ENCODE measurements at regions of chr1 and their contacts with region 1.

Region 1: GRCh38 chr1:45011837-45012638 is at the start of gene UROD:
- DNase-seq: peak; percentile 96
- ATAC-seq: peak; percentile 81
- H3K4me3 Mint-ChIP-seq: peak within 1 kb of the TSS; percentile 75
- H3K27ac Mint-ChIP-seq: peak within 1 kb of the TSS; percentile 93
- H3K4me1 Mint-ChIP-seq: peaks cover 35% of the 10 kb centered on the region
- H3K27me3 Mint-ChIP-seq: no peaks in the 10 kb centered on the region
- total RNA-seq, gene UROD: 68.5 to 72.7 TPM

Region 2: DNA sequence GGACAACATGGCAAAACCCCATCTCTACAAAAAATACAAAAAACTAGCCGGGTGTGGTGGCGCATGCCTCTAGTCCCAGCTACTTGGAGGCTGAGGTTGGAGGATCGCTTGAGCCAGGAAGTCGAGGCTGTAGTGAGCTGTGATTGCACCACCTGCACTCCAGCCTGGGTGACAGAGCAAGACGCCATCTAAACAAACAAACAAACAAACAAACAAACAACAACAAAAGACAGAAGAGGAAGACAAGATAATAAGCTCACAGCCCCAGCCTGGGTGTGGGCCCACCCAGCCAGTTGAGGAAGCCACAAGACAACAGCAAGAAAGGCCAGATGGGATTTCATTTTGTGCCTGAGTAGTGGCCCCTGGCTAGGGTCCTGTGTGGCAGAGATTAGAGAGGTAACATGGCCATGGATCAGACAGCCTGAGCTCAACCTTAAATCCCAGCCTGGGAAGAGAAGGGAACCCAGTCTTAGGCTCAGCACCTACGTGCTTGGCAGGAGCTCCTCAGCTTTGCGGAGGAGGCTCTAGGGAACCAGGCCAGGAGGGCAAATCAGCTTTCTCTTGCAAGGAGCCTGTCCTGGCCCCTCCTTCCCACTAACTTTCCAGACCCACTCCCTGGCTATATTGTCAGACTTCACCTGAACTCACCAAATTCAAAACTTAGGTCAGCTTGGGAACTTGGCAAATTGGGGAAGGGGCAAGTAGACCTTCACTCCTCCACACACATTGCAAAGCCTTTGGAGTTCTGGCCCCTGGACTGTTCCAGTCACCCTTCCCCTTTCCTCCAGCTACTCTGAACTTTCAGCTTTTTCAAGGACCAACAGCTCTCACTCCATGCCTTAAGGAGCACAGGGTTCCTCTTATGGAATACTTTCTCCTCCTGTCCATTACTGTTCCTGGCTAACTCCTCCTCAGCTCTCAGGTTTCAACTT is 219.0 kb before region 1 on chr1:
- CTCF ChIA-PET with region 1: interaction called, 22 read pairs
- DNase-seq: no peak
- ATAC-seq: no peak
- H3K4me3 Mint-ChIP-seq: no peak overlapping the region
- H3K27ac Mint-ChIP-seq: no peak overlapping the region
- H3K4me1 Mint-ChIP-seq: peaks cover 7% of the 10 kb centered on the region
- H3K27me3 Mint-ChIP-seq: no peaks in the 10 kb centered on the region

Region 3: GRCh38 chr1:44985747-44986359 is 26.2 kb before region 1 on chr1:
- CTCF ChIA-PET with region 1: interaction called, 16 read pairs
- DNase-seq: no peak
- ATAC-seq: no peak
- H3K4me3 Mint-ChIP-seq: peak overlapping the region; percentile 95
- H3K27ac Mint-ChIP-seq: peak overlapping the region; percentile 85
- H3K4me1 Mint-ChIP-seq: peaks cover 20% of the 10 kb centered on the region
- H3K27me3 Mint-ChIP-seq: no peaks in the 10 kb centered on the region

Region 4: GRCh38 chr1:45326627-45327623 is 314.9 kb after region 1 on chr1 and contains the start of gene HPDL:
- CTCF ChIA-PET with region 1: interaction called, 11 read pairs
- DNase-seq: peak; percentile 83
- ATAC-seq: peak; percentile 89
- H3K4me3 Mint-ChIP-seq: peak within 1 kb of the TSS; percentile 80
- H3K27ac Mint-ChIP-seq: peak within 1 kb of the TSS; percentile 83
- H3K4me1 Mint-ChIP-seq: peaks cover 24% of the 10 kb centered on the region
- H3K27me3 Mint-ChIP-seq: no peaks in the 10 kb centered on the region
- total RNA-seq, gene HPDL: 16.3 to 23.4 TPM

Region 5: DNA sequence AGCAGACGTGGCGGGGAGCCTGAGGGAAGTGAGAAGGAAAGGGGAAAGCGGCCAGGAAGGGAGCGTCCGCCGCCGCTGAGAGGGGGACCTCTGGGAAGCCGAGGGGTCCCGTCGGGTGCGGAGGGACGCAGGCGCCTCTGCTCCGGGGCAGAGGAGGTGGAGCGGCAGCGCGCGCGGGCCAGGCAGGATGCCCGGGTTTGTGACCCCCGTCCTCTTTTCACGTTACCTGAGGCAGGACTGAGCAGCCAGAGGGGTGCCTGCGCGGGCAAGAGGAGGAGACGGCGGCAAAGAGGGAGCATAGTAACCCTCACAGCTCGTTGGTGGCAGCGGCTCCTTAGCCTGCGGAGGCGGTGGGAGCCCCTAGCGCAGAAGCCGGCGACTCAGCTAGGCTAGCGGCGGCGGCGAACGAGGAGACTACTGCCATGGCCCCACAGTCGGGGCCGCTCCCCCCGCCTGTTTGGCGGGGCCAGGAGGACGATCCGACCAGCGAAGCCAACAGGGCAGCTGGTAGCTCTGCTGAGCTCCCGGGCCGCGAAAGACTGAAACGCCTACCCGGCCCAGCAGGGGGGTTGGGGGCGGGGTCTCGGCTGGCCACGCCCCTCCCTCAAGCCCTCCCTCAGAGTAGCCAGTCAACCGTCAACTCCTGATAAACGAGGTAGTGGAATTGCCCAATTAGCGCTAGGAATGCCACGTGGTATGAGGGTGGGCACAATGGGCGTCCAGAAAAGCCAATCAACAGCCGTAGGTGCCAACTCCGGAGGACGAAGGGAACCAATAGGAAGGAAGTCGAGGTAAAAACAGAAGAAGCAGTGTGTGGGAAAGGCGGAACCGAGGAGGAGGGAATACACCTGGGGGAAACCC is 478.8 kb after region 1 on chr1 and contains the start of gene TESK2:
- CTCF ChIA-PET with region 1: interaction called, 78 read pairs
- DNase-seq: peak; percentile 99
- ATAC-seq: peak; percentile 95
- H3K4me3 Mint-ChIP-seq: no peak within 1 kb of the TSS
- H3K27ac Mint-ChIP-seq: no peak within 1 kb of the TSS
- H3K4me1 Mint-ChIP-seq: peaks cover 4% of the 10 kb centered on the region
- H3K27me3 Mint-ChIP-seq: peaks cover 4% of the 10 kb centered on the region
- total RNA-seq, gene TESK2: 3.0 to 4.4 TPM